OCI-LY7 (cell line): ENCODE measurements at regions of chr9 and their contacts with region 1.

Region 1: GRCh38 chr9:5628530-5629311 is at the start of gene RIC1:
- DNase-seq: peak; percentile 91
- H3K4me3 ChIP-seq: peak within 1 kb of the TSS; percentile 81
- H3K27ac ChIP-seq: peak within 1 kb of the TSS; percentile 100
- H3K4me1 ChIP-seq: peaks cover 58% of the 10 kb centered on the region
- CTCF ChIP-seq: no peak
- total RNA-seq, gene RIC1: 72.9 and 77.0 TPM in 2 replicates

Region 2: DNA sequence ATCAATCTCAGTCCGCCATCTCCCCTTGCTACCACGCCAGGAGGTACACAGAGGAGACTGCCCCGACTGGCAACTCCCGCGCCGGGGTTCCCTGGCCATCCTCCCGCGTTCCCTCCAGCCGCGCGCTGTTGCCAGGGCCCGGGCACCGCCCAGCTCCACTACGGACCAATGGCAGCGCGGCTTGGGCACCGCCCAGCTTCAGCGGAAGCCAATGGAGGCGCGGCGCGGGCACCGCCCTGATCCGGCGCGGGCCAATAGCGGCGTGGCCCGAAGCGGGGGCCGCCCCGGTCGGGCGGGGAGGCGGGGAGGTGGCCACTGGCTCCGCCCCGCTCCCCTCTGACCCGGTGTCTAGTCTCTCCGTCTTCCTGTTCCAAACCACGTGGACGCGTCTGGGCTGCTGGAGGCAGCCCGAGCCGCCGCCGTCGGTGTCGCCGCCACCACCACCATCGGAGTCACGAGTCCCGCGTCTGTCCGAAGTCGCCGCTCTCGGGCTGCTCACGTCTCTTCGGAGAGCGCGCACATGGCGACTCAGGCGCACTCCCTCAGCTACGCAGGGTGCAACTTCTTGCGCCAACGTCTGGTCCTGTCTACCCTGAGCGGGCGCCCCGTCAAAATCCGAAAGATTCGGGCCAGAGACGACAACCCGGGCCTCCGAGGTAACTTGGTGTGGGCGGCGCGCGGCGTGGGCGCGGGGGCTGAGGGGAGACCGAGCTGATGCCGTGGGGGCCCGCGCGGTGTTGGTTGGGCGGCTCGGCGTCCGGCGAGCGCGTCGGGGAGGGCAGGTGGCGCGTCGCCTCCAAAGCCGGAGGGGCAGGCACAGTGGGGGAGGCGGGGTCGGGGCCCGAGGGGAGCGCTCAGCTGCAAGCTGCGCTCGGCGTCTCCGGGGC is 835.9 kb before region 1 on chr9 and contains the start of gene RCL1:
- CTCF ChIA-PET with region 1: no interaction called
- POLR2A ChIA-PET with region 1: no interaction called
- intact Hi-C with region 1: loop called (anchors 10 kb)
- DNase-seq: peak; percentile 97
- H3K4me3 ChIP-seq: peak within 1 kb of the TSS; percentile 80
- H3K27ac ChIP-seq: peak within 1 kb of the TSS; percentile 45
- H3K4me1 ChIP-seq: peaks cover 27% of the 10 kb centered on the region
- CTCF ChIP-seq: no peak
- total RNA-seq, gene RCL1: 25.0 and 27.5 TPM in 2 replicates

Region 3: GRCh38 chr9:5479994-5480694 is 148.6 kb before region 1 on chr9:
- CTCF ChIA-PET with region 1: no interaction called
- POLR2A ChIA-PET with region 1: no interaction called
- intact Hi-C with region 1: no loop called
- DNase-seq: no peak
- H3K4me3 ChIP-seq: no peak overlapping the region
- H3K27ac ChIP-seq: no peak overlapping the region
- H3K4me1 ChIP-seq: no peaks in the 10 kb centered on the region
- CTCF ChIP-seq: no peak

Region 4: DNA sequence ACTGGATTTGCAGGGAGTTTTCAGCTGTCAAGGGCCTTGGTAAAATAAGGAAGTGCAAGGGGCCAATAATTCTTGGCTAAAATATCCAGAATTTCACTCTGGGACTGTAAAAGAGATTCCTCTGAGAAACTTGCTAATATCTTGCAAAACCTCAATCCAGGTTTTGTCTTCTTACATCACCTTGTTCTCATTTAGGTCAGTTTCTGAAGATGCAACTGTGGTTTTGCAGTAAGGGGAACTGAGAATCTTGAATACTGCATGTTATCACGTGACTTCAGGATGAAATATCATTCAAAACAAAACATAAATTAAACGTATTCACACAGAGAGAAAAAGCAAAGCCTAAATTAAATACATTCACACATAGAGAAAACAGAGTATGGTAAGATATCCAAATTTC is 34.8 kb before region 1 on chr9:
- CTCF ChIA-PET with region 1: no interaction called
- POLR2A ChIA-PET with region 1: interaction called, 12 read pairs
- intact Hi-C with region 1: loop called (anchors 2 kb)
- DNase-seq: peak; percentile 89
- H3K4me3 ChIP-seq: peak overlapping the region; percentile 22
- H3K27ac ChIP-seq: peak overlapping the region; percentile 70
- H3K4me1 ChIP-seq: peaks cover 70% of the 10 kb centered on the region
- CTCF ChIP-seq: no peak

Region 5: GRCh38 chr9:5617749-5618148 is 11.0 kb before region 1 on chr9:
- CTCF ChIA-PET with region 1: interaction called, 3 read pairs
- POLR2A ChIA-PET with region 1: interaction called, 17 read pairs
- intact Hi-C with region 1: loop called (anchors 1 kb)
- DNase-seq: peak; percentile 79
- H3K4me3 ChIP-seq: peak overlapping the region; percentile 55
- H3K27ac ChIP-seq: peak overlapping the region; percentile 85
- H3K4me1 ChIP-seq: peaks cover 36% of the 10 kb centered on the region
- CTCF ChIP-seq: no peak

Region 6: DNA sequence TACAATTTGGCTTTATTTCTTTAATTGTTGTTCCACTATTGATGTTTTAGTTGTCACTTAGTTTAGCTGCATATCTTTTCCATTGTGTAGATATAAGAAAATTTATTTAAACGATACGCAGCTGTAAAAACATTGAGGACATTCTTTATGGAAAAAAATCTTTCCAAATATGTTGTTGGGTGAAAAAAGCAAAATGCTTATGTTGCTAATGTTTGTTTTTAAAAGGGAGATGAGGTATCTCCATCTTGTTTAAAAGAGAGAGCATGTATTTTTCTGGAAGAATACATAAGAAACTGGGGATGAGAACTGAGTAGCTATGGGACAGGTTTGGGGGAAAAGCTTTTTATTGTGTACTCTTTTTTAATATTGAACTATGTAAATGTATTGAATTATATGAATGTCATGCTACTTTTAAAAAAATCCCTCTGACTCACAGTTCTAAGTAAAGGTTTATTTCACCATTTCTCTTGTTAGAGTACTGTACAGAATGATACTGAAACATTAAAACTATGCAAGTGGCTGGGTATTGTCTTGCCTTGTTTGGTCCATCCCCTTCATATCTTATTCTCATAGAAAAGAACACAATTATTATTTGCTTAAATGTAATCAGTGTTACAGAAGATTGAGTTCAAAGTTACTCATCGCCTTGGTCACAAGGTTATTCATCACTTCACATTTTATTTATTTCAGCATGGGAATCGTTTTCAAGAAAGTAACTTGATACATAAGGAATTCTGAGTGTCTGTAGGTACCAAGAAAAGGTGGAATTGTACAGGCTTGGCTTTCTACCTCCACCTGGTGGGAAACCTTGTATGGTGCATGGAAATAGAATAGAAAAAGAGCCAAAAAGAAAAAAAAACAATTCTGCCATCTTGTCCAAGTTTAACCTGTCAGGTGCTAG is 86.0 kb after region 1 on chr9:
- CTCF ChIA-PET with region 1: no interaction called
- POLR2A ChIA-PET with region 1: interaction called, 4 read pairs
- intact Hi-C with region 1: loop called (anchors 2 kb)
- DNase-seq: peak; percentile 26
- H3K4me3 ChIP-seq: no peak overlapping the region
- H3K27ac ChIP-seq: no peak overlapping the region
- H3K4me1 ChIP-seq: no peaks in the 10 kb centered on the region
- CTCF ChIP-seq: peak; percentile 79

Region 7: GRCh38 chr9:5832543-5833529 is 204.1 kb after region 1 on chr9 and contains the start of gene ERMP1:
- CTCF ChIA-PET with region 1: no interaction called
- POLR2A ChIA-PET with region 1: interaction called, 4 read pairs
- intact Hi-C with region 1: loop called (anchors 2 kb)
- DNase-seq: peak; percentile 88
- H3K4me3 ChIP-seq: peak within 1 kb of the TSS; percentile 89
- H3K27ac ChIP-seq: peak within 1 kb of the TSS; percentile 70
- H3K4me1 ChIP-seq: peaks cover 43% of the 10 kb centered on the region
- CTCF ChIP-seq: peak; percentile 88
- total RNA-seq, gene ERMP1: 7.9 and 11.1 TPM in 2 replicates

Region 8: GRCh38 chr9:6681147-6681956 is 1052.6 kb after region 1 on chr9:
- CTCF ChIA-PET with region 1: no interaction called
- POLR2A ChIA-PET with region 1: no interaction called
- intact Hi-C with region 1: loop called (anchors 5 kb)
- DNase-seq: peak; percentile 95
- H3K4me3 ChIP-seq: peak overlapping the region; percentile 85
- H3K27ac ChIP-seq: peak overlapping the region; percentile 89
- H3K4me1 ChIP-seq: peaks cover 32% of the 10 kb centered on the region
- CTCF ChIP-seq: no peak